ENCODE measurements at regions of chr6 and their contacts with region 1.

Region 1: GRCh38 chr6:31958741-31959739 is at the starts of genes NELFE and SKIC2:
- DNase-seq: peak; percentile 98
- H3K4me3 ChIP-seq: peak within 1 kb of the TSS; percentile 82 to 95 (median 92)
- H3K27ac ChIP-seq: peak within 1 kb of the TSS; percentile 79
- H3K4me1 ChIP-seq: peaks cover 12% of the 10 kb centered on the region
- H3K27me3 ChIP-seq: no peaks in the 10 kb centered on the region
- CTCF ChIP-seq: no peak
- total RNA-seq, gene NELFE: 69.7 to 77.7 TPM
- total RNA-seq, gene SKIC2: 46.7 to 51.1 TPM

Region 2: DNA sequence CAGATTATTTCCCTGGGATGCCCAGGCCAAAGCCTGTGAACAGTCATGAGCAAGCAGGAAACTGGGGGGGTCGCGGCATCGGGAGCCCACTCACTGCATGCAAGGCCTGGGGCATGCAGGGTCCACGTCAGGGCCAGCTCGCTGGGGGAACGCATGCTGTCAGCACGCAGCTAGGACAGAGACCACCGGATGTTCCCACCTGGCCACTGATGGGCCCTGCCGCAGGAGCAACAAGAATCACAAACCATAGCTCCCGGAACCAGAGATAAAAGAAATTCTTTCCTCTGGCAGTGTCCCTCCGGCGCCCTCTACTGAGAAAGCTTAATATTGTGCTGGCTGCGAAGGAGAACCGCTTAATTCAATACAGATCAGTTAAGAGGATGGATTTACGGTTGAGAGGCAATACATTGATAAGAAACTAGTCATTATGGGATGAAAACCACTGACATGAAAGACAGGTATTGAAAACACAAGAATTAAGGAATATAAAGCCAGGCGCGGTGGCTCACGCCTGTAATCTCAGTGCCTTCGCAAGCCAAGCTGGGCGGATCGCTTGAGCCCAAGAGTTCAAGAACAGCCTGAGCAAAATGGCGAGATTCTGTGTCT is 879.3 kb before region 1 on chr6:
- CTCF ChIA-PET with region 1: no interaction called
- dilution Hi-C with region 1: no loop called
- in situ Hi-C with region 1: no loop called
- intact Hi-C with region 1: no loop called
- DNase-seq: peak; percentile 49
- H3K4me3 ChIP-seq: peak overlapping the region in 1 of 3 experiments; percentile 27
- H3K27ac ChIP-seq: no peak overlapping the region
- H3K4me1 ChIP-seq: peaks cover 8% of the 10 kb centered on the region
- H3K27me3 ChIP-seq: no peaks in the 10 kb centered on the region
- CTCF ChIP-seq: peak; percentile 72 to 83

Region 3: GRCh38 chr6:31246050-31246521 is 713.0 kb before region 1 on chr6:
- CTCF ChIA-PET with region 1: no interaction called
- dilution Hi-C with region 1: no loop called
- in situ Hi-C with region 1: no loop called
- intact Hi-C with region 1: no loop called
- DNase-seq: peak; percentile 95
- H3K4me3 ChIP-seq: no peak overlapping the region
- H3K27ac ChIP-seq: no peak overlapping the region
- H3K4me1 ChIP-seq: peaks cover 18% of the 10 kb centered on the region
- H3K27me3 ChIP-seq: no peaks in the 10 kb centered on the region
- CTCF ChIP-seq: no peak

Region 4: DNA sequence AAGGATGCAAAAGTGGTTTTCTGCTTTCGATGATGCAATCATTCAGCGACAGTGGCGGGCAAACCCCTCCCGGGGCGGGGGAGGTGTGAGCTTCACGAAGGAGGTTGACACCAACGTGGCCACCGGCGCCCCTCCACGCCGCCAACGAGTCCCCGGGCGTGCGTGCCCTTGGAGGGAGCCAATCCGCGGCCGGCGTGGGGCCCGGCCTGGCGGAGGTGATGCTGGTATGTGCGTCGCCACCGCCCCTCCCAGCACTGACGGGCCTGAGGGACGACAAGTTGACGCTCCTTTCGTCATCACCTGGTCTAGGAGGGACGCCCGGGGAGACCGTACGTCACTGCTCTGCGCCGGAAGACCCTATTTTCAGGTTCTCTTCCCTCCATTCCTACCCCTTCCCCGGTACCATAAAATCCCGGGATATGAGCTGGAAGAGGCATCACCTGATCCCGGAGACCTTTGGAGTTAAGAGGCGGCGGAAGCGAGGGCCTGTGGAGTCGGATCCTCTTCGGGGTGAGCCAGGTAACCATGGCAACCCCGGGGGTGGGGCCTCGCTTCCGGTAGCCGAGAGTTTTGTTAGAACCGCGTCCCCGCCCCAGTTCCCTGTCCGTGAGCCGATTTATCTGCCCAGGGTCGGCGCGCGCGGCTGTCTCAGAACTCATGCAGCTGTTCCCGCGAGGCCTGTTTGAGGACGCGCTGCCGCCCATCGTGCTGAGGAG is 13.1 kb after region 1 on chr6 and contains the start of gene DXO:
- CTCF ChIA-PET with region 1: no interaction called
- dilution Hi-C with region 1: no loop called
- in situ Hi-C with region 1: no loop called
- intact Hi-C with region 1: loop called (anchors 1 kb)
- DNase-seq: peak; percentile 99
- H3K4me3 ChIP-seq: peak within 1 kb of the TSS; percentile 61 to 80 (median 77)
- H3K27ac ChIP-seq: peak within 1 kb of the TSS; percentile 97
- H3K4me1 ChIP-seq: peaks cover 21% of the 10 kb centered on the region
- H3K27me3 ChIP-seq: no peaks in the 10 kb centered on the region
- CTCF ChIP-seq: no peak
- total RNA-seq, gene DXO: 15.7 to 24.1 TPM

Measured in mammary epithelial cell (primary cell).